HepG2 (cell line): ENCODE measurements at regions of chr17 and their contacts with region 1.

Region 1: GRCh38 chr17:66957951-66958579 is 6.4 kb upstream of the CACNG4 start:
- DNase-seq: peak; percentile 89
- ATAC-seq: peak; percentile 98
- H3K4me3 ChIP-seq: peak overlapping the region; percentile 7 to 60 (median 18); a peak in 5 of 6 replicates
- H3K27ac ChIP-seq: peak overlapping the region; percentile 72
- H3K4me1 ChIP-seq: peaks cover 25% of the 10 kb centered on the region
- H3K27me3 ChIP-seq: peaks cover 0 to 25% of the 10 kb centered on the region in 2 experiments; a peak in 4 of 5 replicates
- CTCF ChIP-seq: peak; percentile 44
- EP300 ChIP-seq: peak in 1 of 2 experiments; percentile 71; a peak in 1 of 4 replicates
- POLR2A ChIP-seq: no peak
- RAD21 ChIP-seq: peak; percentile 36

Region 2: DNA sequence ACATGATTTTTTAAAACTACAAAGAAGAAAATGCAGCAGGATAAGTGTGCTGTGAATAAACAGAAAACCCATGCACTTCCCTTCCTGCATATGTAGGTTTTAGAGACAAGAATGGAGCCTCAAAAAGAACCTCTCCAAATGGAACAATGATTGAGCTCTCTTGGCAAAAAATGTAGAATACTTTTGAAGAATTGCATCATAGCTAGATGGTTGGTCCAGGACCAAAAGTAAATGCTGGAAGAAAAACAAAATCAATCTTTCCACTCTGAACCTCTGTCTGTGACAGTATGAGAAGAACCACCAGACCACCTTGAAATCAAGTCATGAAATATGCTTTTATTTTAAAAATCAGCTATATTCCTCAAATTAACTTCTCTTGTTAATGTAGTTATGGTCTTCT is 269.4 kb after region 1 on chr17:
- CTCF ChIA-PET with region 1: no interaction called
- POLR2A ChIA-PET with region 1: no interaction called
- in situ Hi-C with region 1: no loop called
- intact Hi-C with region 1: loop called (anchors 2 kb)
- DNase-seq: no peak
- ATAC-seq: no peak
- H3K4me3 ChIP-seq: no peak overlapping the region
- H3K27ac ChIP-seq: no peak overlapping the region
- H3K4me1 ChIP-seq: peaks cover 31% of the 10 kb centered on the region; the same call in 1 of the 2 replicates
- H3K27me3 ChIP-seq: no peaks in the 10 kb centered on the region
- CTCF ChIP-seq: no peak
- EP300 ChIP-seq: no peak
- POLR2A ChIP-seq: no peak
- RAD21 ChIP-seq: no peak